Dendritic cell treated with granulocyte-macrophage colony-stimulating factor and Interleukin-4, amounts not matched to agents 40 ng/mL and 50 ng/mL, for 4 days (primary cell): ENCODE measurements at regions of chr1 and their contacts with region 1.

Region 1: GRCh38 chr1:213231795-213232231 is 180.8 kb downstream of the RPS6KC1 start:
- H3K4me3 Mint-ChIP-seq: no peak overlapping the region
- H3K27ac Mint-ChIP-seq: no peak overlapping the region
- H3K4me1 Mint-ChIP-seq: no peaks in the 10 kb centered on the region
- H3K27me3 Mint-ChIP-seq: no peaks in the 10 kb centered on the region

Region 2: GRCh38 chr1:213122514-213122929 is 109.3 kb before region 1 on chr1:
- intact Hi-C with region 1: loop called (anchors 10 kb)
- H3K4me3 Mint-ChIP-seq: no peak overlapping the region
- H3K27ac Mint-ChIP-seq: no peak overlapping the region
- H3K4me1 Mint-ChIP-seq: peaks cover 13% of the 10 kb centered on the region
- H3K27me3 Mint-ChIP-seq: no peaks in the 10 kb centered on the region